Right cardiac atrium (tissue), 5 donors: ENCODE measurements at regions of chr9 and their contacts with region 1.

Region 1: GRCh38 chr9:112997236-112997941 is 14.6 kb downstream of the ZNF883 start:
- DNase-seq: no peak
- ATAC-seq: no peak
- H3K4me3 ChIP-seq: no peak overlapping the region
- H3K27ac ChIP-seq: no peak overlapping the region
- H3K4me1 ChIP-seq: no peaks in the 10 kb centered on the region
- H3K27me3 ChIP-seq: no peaks in the 10 kb centered on the region

Region 2: DNA sequence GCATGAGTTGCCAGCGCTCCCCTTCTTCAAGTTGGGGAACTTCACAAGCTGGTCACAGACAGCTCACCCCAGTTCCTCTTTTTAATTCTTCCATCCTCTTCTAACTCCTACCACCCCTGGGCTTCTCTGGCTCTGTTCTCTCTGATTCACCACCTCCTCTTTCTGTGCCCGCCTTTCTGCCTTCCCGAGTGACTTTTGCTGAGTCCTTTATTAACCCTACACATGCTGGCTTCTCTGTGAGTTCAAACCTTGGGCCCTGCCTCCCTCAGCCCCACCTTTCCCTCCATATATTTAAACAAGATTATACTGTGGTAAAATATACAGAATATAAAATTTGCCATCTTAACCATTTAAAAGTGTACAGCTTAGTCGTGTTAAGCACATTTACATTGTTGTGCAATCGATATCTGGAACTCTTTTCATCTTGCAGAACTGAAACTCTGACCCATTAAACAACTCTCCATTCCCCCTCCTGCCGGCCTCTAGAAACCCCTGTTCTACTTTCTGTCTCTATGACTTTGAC is 138.7 kb before region 1 on chr9:
- intact Hi-C with region 1: no loop called
- DNase-seq: no peak
- ATAC-seq: peak; percentile 43 to 46
- H3K4me3 ChIP-seq: no peak overlapping the region
- H3K27ac ChIP-seq: no peak overlapping the region
- H3K4me1 ChIP-seq: peaks cover 1% of the 10 kb centered on the region
- H3K27me3 ChIP-seq: no peaks in the 10 kb centered on the region

Region 3: GRCh38 chr9:112945620-112946208 is 51.7 kb before region 1 on chr9:
- intact Hi-C with region 1: no loop called
- DNase-seq: no peak
- ATAC-seq: no peak
- H3K4me3 ChIP-seq: no peak overlapping the region
- H3K27ac ChIP-seq: no peak overlapping the region
- H3K4me1 ChIP-seq: no peaks in the 10 kb centered on the region
- H3K27me3 ChIP-seq: no peaks in the 10 kb centered on the region

Region 4: DNA sequence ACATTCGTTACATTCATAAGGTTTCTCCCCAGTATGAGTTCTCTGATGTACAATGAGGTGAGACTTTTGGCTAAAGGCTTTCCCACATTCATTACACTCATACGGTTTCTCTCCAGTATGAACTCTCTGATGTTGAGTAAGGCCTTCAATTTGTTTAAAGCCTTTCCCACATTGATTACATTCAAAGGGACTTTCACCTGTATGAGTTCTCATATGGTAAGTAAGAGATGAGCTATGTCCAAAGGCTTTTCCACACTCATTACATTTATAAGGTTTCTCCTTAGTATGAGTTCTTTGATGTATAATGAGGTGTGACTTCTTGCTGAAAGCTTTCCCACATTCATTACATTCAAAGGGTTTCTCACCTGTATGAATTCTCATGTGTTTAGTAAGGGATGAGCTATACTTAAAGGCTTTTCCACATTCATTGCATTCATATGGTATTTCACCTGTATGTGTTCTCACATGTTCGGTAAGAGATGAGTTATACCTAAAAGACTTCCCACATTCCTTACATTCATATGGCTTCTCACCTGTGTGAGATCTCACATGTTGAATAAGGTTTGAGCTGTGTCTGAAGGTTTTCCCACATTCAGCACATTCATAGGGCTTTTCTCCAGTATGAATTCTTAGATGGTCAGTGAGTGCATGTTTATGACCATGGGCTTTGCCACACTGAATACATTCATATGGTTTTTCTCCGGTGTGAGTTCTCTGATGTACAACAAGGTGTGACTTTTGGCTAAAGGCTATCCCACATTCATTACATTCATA is 45.7 kb after region 1 on chr9:
- intact Hi-C with region 1: loop called in 1 of 4 experiments (anchors 10 kb)
- DNase-seq: no peak
- ATAC-seq: no peak
- H3K4me3 ChIP-seq: no peak overlapping the region
- H3K27ac ChIP-seq: no peak overlapping the region
- H3K4me1 ChIP-seq: no peaks in the 10 kb centered on the region
- H3K27me3 ChIP-seq: no peaks in the 10 kb centered on the region